ENCODE measurements at regions of chr6 and their contacts with region 1.

Region 1: GRCh38 chr6:97437087-97437486 is 154.1 kb upstream of the MMS22L start:
- DNase-seq: peak; percentile 44
- H3K4me3 Mint-ChIP-seq: no peak overlapping the region
- H3K27ac Mint-ChIP-seq: no peak overlapping the region
- H3K4me1 Mint-ChIP-seq: no peaks in the 10 kb centered on the region
- H3K27me3 Mint-ChIP-seq: peaks cover 84% of the 10 kb centered on the region
- CTCF ChIP-seq: peak; percentile 69

Region 2: DNA sequence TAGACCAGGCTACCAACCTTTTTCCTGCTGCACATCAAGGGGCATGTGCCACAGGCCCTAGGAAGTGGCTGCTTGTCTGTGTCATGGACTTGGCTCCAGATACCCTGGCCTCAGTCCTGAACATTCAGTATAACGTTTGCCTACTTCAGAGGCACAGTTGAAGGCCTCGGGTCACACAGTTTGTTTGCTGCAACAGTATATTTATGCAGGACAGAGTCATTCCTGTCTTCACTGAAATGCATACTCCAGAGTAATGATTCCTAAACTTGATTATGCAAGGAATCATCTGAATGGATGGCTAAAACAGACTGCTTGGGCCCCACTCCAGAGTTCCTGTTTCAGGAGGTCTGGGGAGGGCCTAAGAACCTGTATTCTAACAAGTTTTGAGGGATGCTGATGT is 363.2 kb before region 1 on chr6:
- CTCF ChIA-PET with region 1: interaction called, 5 read pairs
- POLR2A ChIA-PET with region 1: no interaction called
- intact Hi-C with region 1: loop called (anchors 5 kb)
- DNase-seq: no peak
- H3K4me3 Mint-ChIP-seq: no peak overlapping the region
- H3K27ac Mint-ChIP-seq: no peak overlapping the region
- H3K4me1 Mint-ChIP-seq: no peaks in the 10 kb centered on the region
- H3K27me3 Mint-ChIP-seq: peaks cover 7% of the 10 kb centered on the region
- CTCF ChIP-seq: no peak

Region 3: GRCh38 chr6:97150932-97151331 is 286.2 kb before region 1 on chr6:
- CTCF ChIA-PET with region 1: no interaction called
- POLR2A ChIA-PET with region 1: no interaction called
- intact Hi-C with region 1: no loop called
- DNase-seq: no peak
- H3K4me3 Mint-ChIP-seq: no peak overlapping the region
- H3K27ac Mint-ChIP-seq: no peak overlapping the region
- H3K4me1 Mint-ChIP-seq: no peaks in the 10 kb centered on the region
- H3K27me3 Mint-ChIP-seq: no peaks in the 10 kb centered on the region
- CTCF ChIP-seq: no peak

Region 4: DNA sequence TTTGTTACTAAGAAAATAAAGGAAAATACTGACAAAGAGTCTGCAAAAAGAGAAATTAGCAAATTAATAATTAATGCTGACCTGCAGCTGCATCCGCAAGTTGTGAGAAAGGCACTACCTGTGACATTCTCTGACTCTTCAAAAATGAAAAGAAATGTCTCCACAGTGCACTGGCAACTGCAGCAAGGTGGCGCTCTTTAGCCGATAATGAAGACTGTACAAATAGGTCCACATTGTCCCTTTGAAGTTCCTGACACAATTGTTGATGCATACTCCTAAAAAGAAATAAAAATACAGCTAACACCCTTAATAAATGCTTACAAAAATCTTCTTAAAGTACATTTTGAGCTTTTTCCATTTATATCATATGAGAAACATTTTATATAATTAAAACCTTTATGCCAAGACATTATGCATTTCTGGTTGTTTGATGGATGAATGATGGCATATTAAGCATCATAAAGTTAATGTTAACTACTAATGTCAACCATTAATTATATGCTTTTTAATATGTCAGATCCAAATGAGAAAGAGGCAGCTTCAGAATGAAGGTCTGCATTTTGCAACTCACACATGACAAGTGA is 250.6 kb before region 1 on chr6:
- CTCF ChIA-PET with region 1: interaction called, 5 read pairs
- POLR2A ChIA-PET with region 1: no interaction called
- intact Hi-C with region 1: loop called (anchors 1 kb)
- DNase-seq: peak; percentile 78
- H3K4me3 Mint-ChIP-seq: no peak overlapping the region
- H3K27ac Mint-ChIP-seq: no peak overlapping the region
- H3K4me1 Mint-ChIP-seq: peaks cover 6% of the 10 kb centered on the region
- H3K27me3 Mint-ChIP-seq: no peaks in the 10 kb centered on the region
- CTCF ChIP-seq: peak; percentile 77

Region 5: GRCh38 chr6:97450087-97450486 is 13.0 kb after region 1 on chr6:
- CTCF ChIA-PET with region 1: interaction called, 20 read pairs
- POLR2A ChIA-PET with region 1: interaction called, 3 read pairs
- intact Hi-C with region 1: no loop called
- DNase-seq: no peak
- H3K4me3 Mint-ChIP-seq: no peak overlapping the region
- H3K27ac Mint-ChIP-seq: no peak overlapping the region
- H3K4me1 Mint-ChIP-seq: no peaks in the 10 kb centered on the region
- H3K27me3 Mint-ChIP-seq: peaks cover 92% of the 10 kb centered on the region
- CTCF ChIP-seq: no peak

Region 6: DNA sequence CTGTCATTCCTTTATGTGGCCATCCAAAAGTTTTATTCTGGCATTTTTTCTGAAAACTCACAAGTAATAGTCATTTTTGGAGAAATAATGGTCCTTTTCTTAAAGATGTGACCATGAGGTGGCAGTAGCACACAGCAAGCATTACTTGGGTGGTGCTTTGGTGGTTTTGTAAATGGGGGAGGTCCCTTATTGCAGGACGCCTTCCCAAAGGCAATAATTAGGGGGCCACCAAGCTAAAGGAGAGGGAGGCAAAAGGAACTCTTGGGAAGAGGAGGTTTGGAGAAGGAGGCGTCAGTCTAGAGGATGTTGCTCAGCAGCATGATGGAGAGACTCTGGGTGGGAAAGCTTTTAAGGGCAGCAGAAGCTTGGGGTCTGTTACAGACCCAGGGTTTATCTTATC is 268.5 kb after region 1 on chr6:
- CTCF ChIA-PET with region 1: no interaction called
- POLR2A ChIA-PET with region 1: no interaction called
- intact Hi-C with region 1: no loop called
- DNase-seq: peak; percentile 14
- H3K4me3 Mint-ChIP-seq: no peak overlapping the region
- H3K27ac Mint-ChIP-seq: no peak overlapping the region
- H3K4me1 Mint-ChIP-seq: no peaks in the 10 kb centered on the region
- H3K27me3 Mint-ChIP-seq: peaks cover 50% of the 10 kb centered on the region
- CTCF ChIP-seq: peak; percentile 51

Measured in MCF 10A (cell line).